ENCODE measurements at regions of chr13 and their contacts with region 1.

Region 1: DNA sequence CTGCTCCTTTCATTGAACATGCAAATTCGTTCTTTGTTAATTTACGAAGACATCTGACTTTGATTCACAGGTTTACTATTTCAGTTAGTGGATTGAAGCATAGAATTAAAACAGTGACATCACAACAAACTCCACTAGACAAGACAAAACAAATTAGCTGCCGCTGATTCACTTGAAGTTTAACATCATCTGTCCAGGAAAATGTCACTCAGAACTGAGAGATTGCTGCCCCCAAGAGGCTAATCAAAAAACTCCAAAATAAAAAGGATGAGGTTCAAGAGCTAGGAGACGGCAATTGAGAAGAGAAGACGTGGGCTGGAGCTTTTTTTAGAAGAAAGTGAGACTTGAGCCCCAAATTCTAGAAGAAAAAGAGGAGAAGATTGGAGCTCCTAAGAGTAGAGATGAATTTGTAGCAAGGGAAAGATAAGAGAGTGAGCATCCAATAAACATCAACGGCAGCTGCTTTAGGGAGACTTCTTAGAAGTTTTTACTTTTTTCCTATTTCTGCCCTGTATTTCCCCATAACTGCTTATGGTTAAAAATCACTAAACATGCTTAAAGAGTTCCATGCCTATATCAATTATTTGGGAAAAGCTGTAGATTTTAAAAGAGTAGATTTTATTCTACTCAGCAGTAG is 40.8 kb upstream of the TPP2 start:
- DNase-seq: no peak
- ATAC-seq: peak; percentile 77
- H3K4me3 Mint-ChIP-seq: no peak overlapping the region
- H3K27ac Mint-ChIP-seq: no peak overlapping the region
- H3K4me1 Mint-ChIP-seq: no peaks in the 10 kb centered on the region
- H3K27me3 Mint-ChIP-seq: no peaks in the 10 kb centered on the region
- CTCF ChIP-seq: peak; percentile 30; the same call in 1 of the 2 replicates

Region 2: DNA sequence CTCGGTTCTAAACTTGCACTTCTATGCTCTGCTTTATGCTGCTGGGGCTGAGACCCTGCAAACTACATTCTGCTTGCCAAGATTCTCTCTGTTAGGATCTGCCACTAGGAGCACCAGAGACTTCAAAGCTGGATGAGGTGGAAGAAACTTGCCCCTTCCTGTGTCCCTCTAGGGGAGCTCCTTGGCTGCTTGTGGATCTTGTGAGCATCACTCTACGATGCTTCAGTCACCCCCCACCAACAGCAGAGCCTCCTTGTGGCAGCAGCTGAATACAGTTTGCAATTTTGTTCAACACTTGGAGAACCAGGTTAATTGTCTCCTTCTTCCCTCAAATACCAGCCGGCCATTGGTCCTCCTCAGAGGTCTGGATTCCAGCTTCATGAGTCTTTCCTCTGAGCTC is 464.8 kb before region 1 on chr13:
- CTCF ChIA-PET with region 1: interaction called, 13 read pairs
- POLR2A ChIA-PET with region 1: no interaction called
- DNase-seq: peak; percentile 61
- ATAC-seq: peak; percentile 100
- H3K4me3 Mint-ChIP-seq: no peak overlapping the region
- H3K27ac Mint-ChIP-seq: no peak overlapping the region
- H3K4me1 Mint-ChIP-seq: no peaks in the 10 kb centered on the region
- H3K27me3 Mint-ChIP-seq: no peaks in the 10 kb centered on the region
- CTCF ChIP-seq: no peak

Region 3: DNA sequence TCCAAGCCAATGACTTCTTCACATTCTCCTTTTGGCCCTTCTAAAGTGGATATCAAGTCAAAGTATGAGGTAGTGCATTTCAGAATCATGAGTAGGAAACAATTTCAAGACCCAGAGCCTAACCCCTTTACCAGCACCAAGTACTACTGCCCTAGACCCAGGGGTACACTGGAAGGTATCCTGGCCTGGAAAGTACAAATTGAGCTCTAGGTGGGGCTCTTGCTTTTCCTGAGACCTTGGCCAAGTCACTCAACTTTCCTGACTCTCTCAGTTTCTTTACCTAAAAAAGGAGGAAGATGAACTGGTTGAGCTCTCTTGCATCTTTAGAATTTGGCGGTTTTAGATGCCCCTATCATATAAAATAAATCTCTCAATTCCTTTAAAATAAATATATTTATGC is 358.8 kb before region 1 on chr13:
- CTCF ChIA-PET with region 1: interaction called, 17 read pairs
- POLR2A ChIA-PET with region 1: no interaction called
- DNase-seq: peak; percentile 29
- ATAC-seq: peak; percentile 98
- H3K4me3 Mint-ChIP-seq: no peak overlapping the region
- H3K27ac Mint-ChIP-seq: no peak overlapping the region; the same call in 1 of the 2 replicates
- H3K4me1 Mint-ChIP-seq: peaks cover 11% of the 10 kb centered on the region
- H3K27me3 Mint-ChIP-seq: no peaks in the 10 kb centered on the region
- CTCF ChIP-seq: no peak

Region 4: DNA sequence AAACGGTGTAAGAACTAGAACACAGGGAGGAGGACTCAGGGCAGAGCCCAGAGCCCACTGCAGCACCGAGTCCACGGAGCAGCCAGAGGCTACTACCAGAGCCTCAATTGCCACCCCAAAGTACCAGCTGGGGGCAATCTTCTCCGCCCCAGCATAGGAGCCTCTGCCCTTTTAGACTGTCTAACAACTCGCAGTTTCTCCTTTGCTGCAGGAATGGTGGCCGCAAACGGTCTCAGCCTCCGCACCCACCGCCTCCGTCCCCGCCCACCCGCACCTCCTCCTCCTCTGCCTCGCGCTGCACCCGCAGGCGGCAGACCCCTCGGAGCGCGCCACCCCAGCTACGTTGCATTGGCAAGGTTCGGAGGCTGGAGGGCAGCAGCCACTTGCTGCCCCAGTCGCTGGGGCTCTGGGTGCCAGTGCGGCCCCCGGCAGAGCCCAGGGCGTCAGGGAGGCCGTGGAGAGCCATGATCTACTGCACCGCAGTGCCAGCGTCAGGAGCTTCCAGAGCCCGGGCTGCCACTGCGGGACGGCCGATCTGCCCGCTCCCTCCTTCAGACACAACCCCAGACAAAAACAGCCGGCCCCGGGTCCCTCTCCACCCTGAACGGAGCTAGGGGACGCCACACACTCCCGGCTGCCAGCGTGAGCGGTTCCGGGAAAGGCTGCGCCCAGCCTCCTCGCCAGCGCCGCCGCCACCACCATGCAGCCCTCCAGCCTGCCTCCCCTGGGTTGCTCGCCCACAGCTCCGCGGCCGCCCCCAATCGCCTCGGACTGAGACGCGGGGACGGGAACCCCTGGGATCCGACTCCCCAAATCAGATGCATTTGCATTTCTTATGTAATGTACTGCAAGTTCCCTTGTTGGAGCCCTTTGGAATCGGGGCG is 156.0 kb before region 1 on chr13:
- CTCF ChIA-PET with region 1: interaction called, 21 read pairs
- POLR2A ChIA-PET with region 1: no interaction called
- DNase-seq: peak; percentile 38
- ATAC-seq: peak; percentile 46
- H3K4me3 Mint-ChIP-seq: peak overlapping the region; percentile 83
- H3K27ac Mint-ChIP-seq: no peak overlapping the region
- H3K4me1 Mint-ChIP-seq: peaks cover 23% of the 10 kb centered on the region
- H3K27me3 Mint-ChIP-seq: peaks cover 58% of the 10 kb centered on the region
- CTCF ChIP-seq: no peak

Region 5: GRCh38 chr13:102466610-102467190 is 89.3 kb before region 1 on chr13:
- CTCF ChIA-PET with region 1: interaction called, 11 read pairs
- POLR2A ChIA-PET with region 1: no interaction called
- DNase-seq: no peak
- ATAC-seq: no peak
- H3K4me3 Mint-ChIP-seq: no peak overlapping the region
- H3K27ac Mint-ChIP-seq: no peak overlapping the region
- H3K4me1 Mint-ChIP-seq: peaks cover 13% of the 10 kb centered on the region
- H3K27me3 Mint-ChIP-seq: no peaks in the 10 kb centered on the region
- CTCF ChIP-seq: no peak

Measured in WTC11 (cell line).